Heart left ventricle (tissue), 16 donors: ENCODE measurements at regions of chr4 and their contacts with region 1.

Region 1: GRCh38 chr4:10063544-10064300 is 42.4 kb upstream of the SLC2A9 start:
- DNase-seq: peak; percentile 68 to 78 (median 69)
- ATAC-seq: peak; percentile 93 to 99 (median 98)
- H3K4me3 ChIP-seq: no peak overlapping the region
- H3K27ac ChIP-seq: peak overlapping the region in 6 of 12 donors; percentile 25 to 59 (median 48)
- H3K4me1 ChIP-seq: peaks cover 0 to 17% (median 9%) of the 10 kb centered on the region in 12 donors
- H3K27me3 ChIP-seq: no peaks in the 10 kb centered on the region
- CTCF ChIP-seq: peak; percentile 67 to 86 (median 78)
- POLR2A ChIP-seq: no peak

Region 2: GRCh38 chr4:9704551-9705332 is 359.0 kb before region 1 on chr4:
- intact Hi-C with region 1: loop called in 2 of 10 experiments (anchors 5 to 10 kb)
- DNase-seq: no peak
- ATAC-seq: no peak
- H3K4me3 ChIP-seq: no peak overlapping the region
- H3K27ac ChIP-seq: no peak overlapping the region
- H3K4me1 ChIP-seq: no peaks in the 10 kb centered on the region
- H3K27me3 ChIP-seq: peaks cover 0 to 4% (median 0%) of the 10 kb centered on the region in 9 donors
- CTCF ChIP-seq: no peak
- POLR2A ChIP-seq: no peak